ENCODE measurements at regions of chr22 and their contacts with region 1.

Region 1: DNA sequence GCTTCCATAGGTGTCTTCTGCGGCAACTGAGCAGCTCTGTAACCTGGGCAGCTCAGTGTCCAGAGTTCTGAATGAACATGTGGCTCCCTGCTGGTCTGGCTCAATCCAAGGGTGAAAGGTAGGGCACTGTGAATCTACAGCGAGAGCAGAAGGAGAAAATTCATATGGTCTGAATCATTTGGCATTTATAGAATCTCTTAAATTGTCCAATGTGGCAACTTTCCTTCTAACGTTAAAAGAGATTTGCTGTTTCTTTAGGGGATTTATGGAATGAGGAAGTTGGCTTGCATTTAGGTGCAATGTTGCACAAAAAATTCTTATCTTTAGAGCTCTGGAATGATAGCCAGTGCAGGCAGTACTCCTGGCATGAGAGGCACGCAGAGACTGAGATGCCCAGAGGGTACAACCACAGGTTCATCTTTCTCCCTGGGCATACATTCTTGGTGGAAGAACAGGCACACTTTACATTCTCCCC is 17.0 kb downstream of the ATXN10 start:
- DNase-seq: no peak
- ATAC-seq: no peak
- H3K4me3 ChIP-seq: no peak overlapping the region
- H3K4me3 Mint-ChIP-seq: no peak overlapping the region
- H3K27ac ChIP-seq: no peak overlapping the region
- H3K27ac Mint-ChIP-seq: no peak overlapping the region
- H3K4me1 ChIP-seq: peaks cover 11 to 16% of the 10 kb centered on the region in 2 donors
- H3K4me1 Mint-ChIP-seq: peaks cover 18% of the 10 kb centered on the region
- H3K27me3 ChIP-seq: no peaks in the 10 kb centered on the region
- H3K27me3 Mint-ChIP-seq: no peaks in the 10 kb centered on the region
- CTCF ChIP-seq: no peak

Region 2: GRCh38 chr22:45671768-45672563 is 16.7 kb before region 1 on chr22 and contains the start of gene ATXN10:
- CTCF ChIA-PET with region 1: no interaction called
- POLR2A ChIA-PET with region 1: no interaction called
- intact Hi-C with region 1: loop called (anchors 2 kb)
- DNase-seq: peak; percentile 83
- ATAC-seq: peak; percentile 79
- H3K4me3 ChIP-seq: peak within 1 kb of the TSS; percentile 6 to 83 (median 73)
- H3K4me3 Mint-ChIP-seq: peak within 1 kb of the TSS; percentile 93
- H3K27ac ChIP-seq: peak within 1 kb of the TSS; percentile 46 to 72
- H3K27ac Mint-ChIP-seq: peak within 1 kb of the TSS; percentile 92
- H3K4me1 ChIP-seq: peaks cover 17 to 19% of the 10 kb centered on the region in 2 donors
- H3K4me1 Mint-ChIP-seq: peaks cover 27% of the 10 kb centered on the region
- H3K27me3 ChIP-seq: no peaks in the 10 kb centered on the region
- H3K27me3 Mint-ChIP-seq: no peaks in the 10 kb centered on the region
- CTCF ChIP-seq: no peak
- total RNA-seq, gene ATXN10: 95.5 and 104 TPM in 2 replicates

Region 3: GRCh38 chr22:45742866-45743450 is 54.3 kb after region 1 on chr22:
- CTCF ChIA-PET with region 1: no interaction called
- POLR2A ChIA-PET with region 1: no interaction called
- intact Hi-C with region 1: no loop called
- DNase-seq: no peak
- ATAC-seq: no peak
- H3K4me3 ChIP-seq: no peak overlapping the region
- H3K4me3 Mint-ChIP-seq: no peak overlapping the region
- H3K27ac ChIP-seq: no peak overlapping the region
- H3K27ac Mint-ChIP-seq: no peak overlapping the region
- H3K4me1 ChIP-seq: no peaks in the 10 kb centered on the region
- H3K4me1 Mint-ChIP-seq: no peaks in the 10 kb centered on the region
- H3K27me3 ChIP-seq: no peaks in the 10 kb centered on the region
- H3K27me3 Mint-ChIP-seq: no peaks in the 10 kb centered on the region
- CTCF ChIP-seq: no peak

Region 4: GRCh38 chr22:45775569-45776312 is 87.1 kb after region 1 on chr22:
- CTCF ChIA-PET with region 1: no interaction called
- POLR2A ChIA-PET with region 1: no interaction called
- intact Hi-C with region 1: loop called (anchors 10 kb)
- DNase-seq: peak; percentile 63
- ATAC-seq: peak; percentile 84
- H3K4me3 ChIP-seq: peak overlapping the region in 2 of 5 experiments; percentile 2 to 28
- H3K4me3 Mint-ChIP-seq: peak overlapping the region; percentile 71
- H3K27ac ChIP-seq: peak overlapping the region; percentile 25 to 61
- H3K27ac Mint-ChIP-seq: peak overlapping the region; percentile 86
- H3K4me1 ChIP-seq: peaks cover 46 to 51% of the 10 kb centered on the region in 2 donors
- H3K4me1 Mint-ChIP-seq: peaks cover 64% of the 10 kb centered on the region
- H3K27me3 ChIP-seq: no peaks in the 10 kb centered on the region
- H3K27me3 Mint-ChIP-seq: no peaks in the 10 kb centered on the region
- CTCF ChIP-seq: no peak

Measured in B cell (primary cell).